ENCODE measurements at regions of chr7 and their contacts with region 1.

Region 1: DNA sequence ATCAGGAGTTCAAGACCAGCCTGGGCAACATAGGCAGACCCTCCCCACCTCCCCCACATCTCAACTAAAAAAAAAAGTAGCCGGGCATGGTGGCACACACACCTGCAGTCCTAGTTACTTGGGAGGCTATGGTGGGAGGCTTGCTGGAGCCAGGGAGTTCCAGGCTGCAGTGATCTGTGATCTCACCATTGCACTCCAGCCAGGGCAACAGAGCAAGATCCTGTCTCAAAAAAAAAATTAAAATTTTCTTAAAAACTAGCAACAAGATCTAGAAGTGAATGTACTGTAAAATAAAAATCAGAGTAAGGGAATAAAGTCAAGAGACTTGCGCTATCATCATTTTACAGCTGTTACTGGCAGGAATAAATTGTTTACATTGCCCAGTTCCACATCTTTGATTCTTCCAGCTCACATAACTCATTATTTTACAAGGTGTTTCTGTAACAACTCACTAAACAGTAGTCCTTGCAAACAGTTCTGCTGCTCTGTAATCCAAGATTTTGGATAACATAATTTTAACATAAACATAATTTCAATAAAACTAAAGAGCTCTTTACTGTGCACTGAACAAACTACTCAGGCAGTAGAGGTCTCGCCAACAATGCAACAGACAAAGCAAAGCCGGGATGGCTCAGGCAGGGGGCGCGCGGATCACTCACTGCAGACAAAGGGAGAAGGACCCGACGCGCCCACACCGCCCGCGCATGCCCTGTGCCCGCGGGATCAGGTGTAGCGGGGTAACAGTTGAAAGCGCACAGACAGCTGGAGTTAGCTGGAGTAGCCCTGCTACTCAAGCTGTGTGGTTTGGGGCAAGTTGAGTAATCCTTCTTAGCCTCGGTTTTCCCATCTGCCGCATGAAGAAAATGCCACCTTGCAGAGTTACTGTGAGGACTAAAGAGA is 73.3 kb upstream of the NFE2L3 start:
- DNase-seq: peak; percentile 88
- ATAC-seq: peak; percentile 100
- H3K4me3 ChIP-seq: no peak overlapping the region
- H3K4me3 Mint-ChIP-seq: peak overlapping the region; percentile 35
- H3K27ac ChIP-seq: no peak overlapping the region
- H3K27ac Mint-ChIP-seq: no peak overlapping the region
- H3K4me1 ChIP-seq: peaks cover 6 to 9% of the 10 kb centered on the region in 2 donors
- H3K4me1 Mint-ChIP-seq: peaks cover 9% of the 10 kb centered on the region
- H3K27me3 ChIP-seq: peaks cover 0 to 31% (median 14%) of the 10 kb centered on the region in 4 experiments
- H3K27me3 Mint-ChIP-seq: peaks cover 53% of the 10 kb centered on the region
- CTCF ChIP-seq: peak; percentile 71

Region 2: GRCh38 chr7:26061688-26062150 is 17.0 kb before region 1 on chr7:
- CTCF ChIA-PET with region 1: interaction called, 10 read pairs
- POLR2A ChIA-PET with region 1: no interaction called
- intact Hi-C with region 1: no loop called
- DNase-seq: peak; percentile 77
- ATAC-seq: peak; percentile 83
- H3K4me3 ChIP-seq: no peak overlapping the region
- H3K4me3 Mint-ChIP-seq: no peak overlapping the region
- H3K27ac ChIP-seq: no peak overlapping the region
- H3K27ac Mint-ChIP-seq: no peak overlapping the region
- H3K4me1 ChIP-seq: no peaks in the 10 kb centered on the region
- H3K4me1 Mint-ChIP-seq: peaks cover 5% of the 10 kb centered on the region
- H3K27me3 ChIP-seq: peaks cover 0 to 38% (median 14%) of the 10 kb centered on the region in 4 experiments
- H3K27me3 Mint-ChIP-seq: peaks cover 60% of the 10 kb centered on the region
- CTCF ChIP-seq: peak; percentile 92

Region 3: GRCh38 chr7:26101361-26102151 is 22.9 kb after region 1 on chr7:
- CTCF ChIA-PET with region 1: interaction called, 6 read pairs
- POLR2A ChIA-PET with region 1: no interaction called
- intact Hi-C with region 1: loop called (anchors 2 kb)
- DNase-seq: peak; percentile 62
- ATAC-seq: peak; percentile 64
- H3K4me3 ChIP-seq: peak overlapping the region; percentile 42 to 85 (median 75)
- H3K4me3 Mint-ChIP-seq: peak overlapping the region; percentile 99
- H3K27ac ChIP-seq: peak overlapping the region; percentile 43 to 77
- H3K27ac Mint-ChIP-seq: peak overlapping the region; percentile 96
- H3K4me1 ChIP-seq: peaks cover 30 to 48% of the 10 kb centered on the region in 2 donors
- H3K4me1 Mint-ChIP-seq: peaks cover 45% of the 10 kb centered on the region
- H3K27me3 ChIP-seq: no peaks in the 10 kb centered on the region
- H3K27me3 Mint-ChIP-seq: no peaks in the 10 kb centered on the region
- CTCF ChIP-seq: no peak

Region 4: GRCh38 chr7:26187380-26188205 is 108.9 kb after region 1 on chr7:
- CTCF ChIA-PET with region 1: interaction called, 24 read pairs
- POLR2A ChIA-PET with region 1: interaction called, 3 read pairs
- intact Hi-C with region 1: no loop called
- DNase-seq: peak; percentile 45
- ATAC-seq: no peak
- H3K4me3 ChIP-seq: no peak overlapping the region
- H3K4me3 Mint-ChIP-seq: no peak overlapping the region
- H3K27ac ChIP-seq: peak overlapping the region in 1 of 2 donors; percentile 20
- H3K27ac Mint-ChIP-seq: peak overlapping the region; percentile 61
- H3K4me1 ChIP-seq: peaks cover 14 to 15% of the 10 kb centered on the region in 2 donors
- H3K4me1 Mint-ChIP-seq: peaks cover 83% of the 10 kb centered on the region
- H3K27me3 ChIP-seq: no peaks in the 10 kb centered on the region
- H3K27me3 Mint-ChIP-seq: no peaks in the 10 kb centered on the region
- CTCF ChIP-seq: no peak

Region 5: GRCh38 chr7:26193432-26194207 is 114.9 kb after region 1 on chr7:
- CTCF ChIA-PET with region 1: interaction called, 53 read pairs
- POLR2A ChIA-PET with region 1: no interaction called
- intact Hi-C with region 1: loop called (anchors 1 kb)
- DNase-seq: peak; percentile 37
- ATAC-seq: no peak
- H3K4me3 ChIP-seq: no peak overlapping the region
- H3K4me3 Mint-ChIP-seq: peak overlapping the region; percentile 59
- H3K27ac ChIP-seq: peak overlapping the region in 1 of 2 donors; percentile 31
- H3K27ac Mint-ChIP-seq: peak overlapping the region; percentile 83
- H3K4me1 ChIP-seq: peaks cover 59 to 62% of the 10 kb centered on the region in 2 donors
- H3K4me1 Mint-ChIP-seq: peaks cover 84% of the 10 kb centered on the region
- H3K27me3 ChIP-seq: no peaks in the 10 kb centered on the region
- H3K27me3 Mint-ChIP-seq: no peaks in the 10 kb centered on the region
- CTCF ChIP-seq: no peak

Region 6: DNA sequence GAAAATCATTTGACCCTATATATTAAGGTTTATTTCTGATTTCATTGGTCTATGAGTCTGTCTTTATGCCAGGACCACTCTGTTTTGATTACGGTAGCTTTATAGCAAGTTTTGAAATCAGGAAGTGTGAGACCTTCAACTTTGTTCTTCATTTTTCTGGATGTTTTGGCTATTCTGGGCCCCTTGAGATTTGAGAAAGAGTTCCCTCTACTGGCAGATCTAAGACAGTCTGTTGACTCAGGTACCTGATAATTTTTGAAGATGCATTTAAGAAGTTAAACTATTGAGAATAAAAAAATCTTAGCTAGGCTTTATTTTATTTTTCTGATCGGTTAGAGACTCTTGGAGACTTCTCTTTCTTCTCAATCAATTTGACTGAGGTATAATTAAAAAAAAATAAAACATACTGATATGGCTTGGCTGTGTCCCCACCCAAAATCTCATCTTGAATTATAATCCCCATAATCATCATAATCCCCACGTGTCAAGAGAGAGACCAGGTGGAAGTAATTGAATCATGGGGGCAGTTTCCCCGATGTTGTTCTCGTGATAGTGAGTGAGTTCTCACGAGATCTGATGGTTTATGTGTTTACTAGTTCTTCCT is 422.2 kb after region 1 on chr7:
- CTCF ChIA-PET with region 1: interaction called, 3 read pairs
- POLR2A ChIA-PET with region 1: no interaction called
- intact Hi-C with region 1: loop called (anchors 5 kb)
- DNase-seq: peak; percentile 70
- ATAC-seq: peak; percentile 70
- H3K4me3 ChIP-seq: no peak overlapping the region
- H3K4me3 Mint-ChIP-seq: no peak overlapping the region
- H3K27ac ChIP-seq: no peak overlapping the region
- H3K27ac Mint-ChIP-seq: no peak overlapping the region
- H3K4me1 ChIP-seq: no peaks in the 10 kb centered on the region
- H3K4me1 Mint-ChIP-seq: no peaks in the 10 kb centered on the region
- H3K27me3 ChIP-seq: peaks cover 0 to 6% (median 3%) of the 10 kb centered on the region in 4 experiments
- H3K27me3 Mint-ChIP-seq: peaks cover 33% of the 10 kb centered on the region
- CTCF ChIP-seq: peak; percentile 73

Region 7: GRCh38 chr7:26667500-26668133 is 588.9 kb after region 1 on chr7:
- CTCF ChIA-PET with region 1: interaction called, 3 read pairs
- POLR2A ChIA-PET with region 1: no interaction called
- intact Hi-C with region 1: loop called (anchors 5 kb)
- DNase-seq: peak; percentile 75
- ATAC-seq: peak; percentile 66
- H3K4me3 ChIP-seq: no peak overlapping the region
- H3K4me3 Mint-ChIP-seq: no peak overlapping the region
- H3K27ac ChIP-seq: no peak overlapping the region
- H3K27ac Mint-ChIP-seq: no peak overlapping the region
- H3K4me1 ChIP-seq: peaks cover 0 to 6% of the 10 kb centered on the region in 2 donors
- H3K4me1 Mint-ChIP-seq: peaks cover 18% of the 10 kb centered on the region
- H3K27me3 ChIP-seq: no peaks in the 10 kb centered on the region
- H3K27me3 Mint-ChIP-seq: no peaks in the 10 kb centered on the region
- CTCF ChIP-seq: peak; percentile 77